MCF 10A (cell line): ENCODE measurements at regions of chr3 and their contacts with region 1.

Region 1: GRCh38 chr3:186754006-186754405 is 29.4 kb upstream of the EIF4A2 start:
- DNase-seq: peak; percentile 55
- H3K4me3 Mint-ChIP-seq: peak overlapping the region; percentile 71
- H3K27ac Mint-ChIP-seq: peak overlapping the region; percentile 97
- H3K4me1 Mint-ChIP-seq: peaks cover 13% of the 10 kb centered on the region
- H3K27me3 Mint-ChIP-seq: no peaks in the 10 kb centered on the region
- CTCF ChIP-seq: no peak

Region 2: DNA sequence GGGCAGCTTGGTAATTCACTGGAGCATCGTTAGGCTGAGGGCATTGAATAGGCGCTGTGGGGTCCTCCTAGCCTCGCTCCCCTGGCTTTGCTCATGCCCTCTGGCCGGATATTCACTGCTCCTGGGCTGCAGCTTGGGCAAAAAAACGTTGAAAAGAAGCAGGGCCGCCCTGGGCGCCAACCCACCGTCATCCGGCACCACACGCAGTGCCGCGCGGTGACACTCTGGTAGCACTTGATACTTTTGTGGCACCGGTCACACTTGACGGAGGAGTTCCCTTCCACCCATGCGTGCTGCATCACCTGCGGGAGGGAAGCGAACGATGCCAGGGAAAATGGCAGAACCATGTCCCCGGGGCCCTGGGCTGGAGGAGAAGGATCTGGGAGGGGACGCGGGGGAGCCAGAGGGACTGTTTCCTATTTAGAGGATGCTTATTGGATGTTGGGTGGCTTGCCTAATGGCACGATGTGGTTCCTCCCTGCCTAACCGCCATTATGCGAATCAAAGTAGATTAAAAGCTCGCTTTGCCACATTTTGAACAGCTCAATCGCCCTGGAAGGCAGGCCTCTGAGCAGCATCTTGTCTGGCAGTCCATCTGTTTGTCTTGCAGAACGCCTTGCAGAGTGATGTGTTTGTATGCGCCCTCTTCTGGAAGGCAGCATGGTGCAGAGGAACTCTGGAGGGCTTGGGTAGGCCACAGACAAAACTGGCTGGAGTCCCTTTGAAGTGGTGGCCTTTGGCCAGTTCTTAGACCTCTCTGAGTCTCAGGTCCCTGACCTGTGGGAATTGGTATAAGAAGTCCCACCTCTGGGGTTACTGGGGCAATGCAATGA is 485.2 kb before region 1 on chr3:
- CTCF ChIA-PET with region 1: no interaction called
- POLR2A ChIA-PET with region 1: no interaction called
- intact Hi-C with region 1: no loop called
- DNase-seq: peak; percentile 11
- H3K4me3 Mint-ChIP-seq: no peak overlapping the region
- H3K27ac Mint-ChIP-seq: no peak overlapping the region
- H3K4me1 Mint-ChIP-seq: no peaks in the 10 kb centered on the region
- H3K27me3 Mint-ChIP-seq: peaks cover 31% of the 10 kb centered on the region
- CTCF ChIP-seq: peak; percentile 18

Region 3: DNA sequence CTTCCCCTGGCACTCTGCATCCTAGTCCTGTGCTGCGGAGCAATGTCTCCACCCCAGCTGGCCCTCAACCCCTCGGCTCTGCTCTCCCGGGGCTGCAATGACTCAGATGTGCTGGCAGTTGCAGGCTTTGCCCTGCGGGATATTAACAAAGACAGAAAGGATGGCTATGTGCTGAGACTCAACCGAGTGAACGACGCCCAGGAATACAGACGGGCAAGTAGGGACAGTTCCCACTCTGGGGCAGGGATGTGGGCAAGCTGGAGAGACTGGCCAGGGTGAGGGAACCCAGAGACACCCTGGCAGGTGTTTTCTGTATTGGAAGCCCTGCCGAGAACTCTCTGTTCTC is 113.6 kb before region 1 on chr3:
- CTCF ChIA-PET with region 1: no interaction called
- POLR2A ChIA-PET with region 1: interaction called, 12 read pairs
- intact Hi-C with region 1: no loop called
- DNase-seq: peak; percentile 96
- H3K4me3 Mint-ChIP-seq: peak overlapping the region; percentile 28
- H3K27ac Mint-ChIP-seq: peak overlapping the region; percentile 53
- H3K4me1 Mint-ChIP-seq: peaks cover 52% of the 10 kb centered on the region
- H3K27me3 Mint-ChIP-seq: no peaks in the 10 kb centered on the region
- CTCF ChIP-seq: no peak